Endothelial cell of umbilical vein (primary cell): ENCODE measurements at regions of chr22 and their contacts with region 1.

Region 1: DNA sequence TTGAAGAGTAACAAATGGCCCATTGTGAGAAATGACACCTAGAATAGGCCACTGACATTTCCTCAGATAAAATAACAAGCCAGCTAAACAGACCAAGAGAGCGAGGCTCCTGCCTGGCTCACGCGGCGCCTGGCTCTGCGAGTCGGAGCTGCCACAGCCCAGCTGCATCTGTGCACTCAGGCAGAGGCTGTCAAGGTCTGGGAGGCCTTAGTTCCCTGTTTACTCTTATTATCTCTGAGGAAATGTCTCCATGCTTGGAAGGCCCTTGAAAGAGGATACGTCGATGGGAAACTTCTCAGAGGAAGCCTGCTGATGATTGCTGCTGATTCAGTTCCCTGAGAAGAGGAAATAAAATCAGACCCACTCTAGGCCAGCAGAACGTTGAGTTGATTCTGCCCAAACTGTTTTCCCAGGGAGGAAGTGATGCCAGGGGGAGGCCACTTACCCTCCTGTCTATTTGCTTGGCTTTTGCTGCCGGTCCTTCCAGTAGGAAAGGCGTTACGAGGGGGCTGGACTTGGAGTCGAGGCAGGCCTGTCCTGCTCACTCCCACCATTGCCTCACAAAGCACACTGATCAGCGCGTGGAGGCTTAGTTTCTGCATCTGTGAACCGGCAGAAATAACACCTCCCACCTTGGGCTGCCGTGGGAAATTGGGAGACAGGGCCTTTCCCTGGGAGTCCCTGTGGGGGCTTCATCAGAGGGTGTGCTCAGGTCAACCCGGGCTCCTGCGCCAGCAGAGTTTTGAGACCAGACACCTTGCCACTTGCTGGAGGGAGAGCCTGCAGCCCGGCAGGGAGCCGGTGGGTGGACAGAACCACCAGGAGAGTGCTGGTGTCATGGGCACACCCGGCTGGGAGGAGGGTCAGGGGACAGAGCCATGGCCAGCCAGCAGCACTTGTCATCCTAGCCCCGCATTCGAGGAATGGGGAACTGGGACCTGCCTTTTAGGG is 209.0 kb downstream of the TBC1D22A start:
- DNase-seq: peak; percentile 98
- H3K4me3 ChIP-seq: no peak overlapping the region
- H3K27ac ChIP-seq: peak overlapping the region; percentile 81
- H3K4me1 ChIP-seq: peaks cover 20% of the 10 kb centered on the region
- H3K27me3 ChIP-seq: no peaks in the 10 kb centered on the region
- CTCF ChIP-seq: no peak
- POLR2A ChIP-seq: no peak

Region 2: GRCh38 chr22:46897246-46897623 is 74.2 kb before region 1 on chr22:
- CTCF ChIA-PET with region 1: no interaction called
- POLR2A ChIA-PET with region 1: no interaction called
- dilution Hi-C with region 1: no loop called
- intact Hi-C with region 1: no loop called
- DNase-seq: no peak
- H3K4me3 ChIP-seq: no peak overlapping the region
- H3K27ac ChIP-seq: no peak overlapping the region
- H3K4me1 ChIP-seq: no peaks in the 10 kb centered on the region
- H3K27me3 ChIP-seq: no peaks in the 10 kb centered on the region
- CTCF ChIP-seq: no peak
- POLR2A ChIP-seq: no peak

Region 3: GRCh38 chr22:46941968-46942798 is 29.2 kb before region 1 on chr22:
- CTCF ChIA-PET with region 1: no interaction called
- POLR2A ChIA-PET with region 1: no interaction called
- dilution Hi-C with region 1: no loop called
- intact Hi-C with region 1: loop called (anchors 1 kb)
- DNase-seq: no peak
- H3K4me3 ChIP-seq: no peak overlapping the region
- H3K27ac ChIP-seq: peak overlapping the region; percentile 83
- H3K4me1 ChIP-seq: peaks cover 13% of the 10 kb centered on the region
- H3K27me3 ChIP-seq: no peaks in the 10 kb centered on the region
- CTCF ChIP-seq: no peak
- POLR2A ChIP-seq: no peak

Region 4: GRCh38 chr22:46984751-46985506 is 13.5 kb after region 1 on chr22:
- CTCF ChIA-PET with region 1: no interaction called
- POLR2A ChIA-PET with region 1: no interaction called
- dilution Hi-C with region 1: no loop called
- intact Hi-C with region 1: loop called (anchors 1 kb)
- DNase-seq: peak; percentile 67
- H3K4me3 ChIP-seq: no peak overlapping the region
- H3K27ac ChIP-seq: peak overlapping the region; percentile 63
- H3K4me1 ChIP-seq: peaks cover 15% of the 10 kb centered on the region
- H3K27me3 ChIP-seq: no peaks in the 10 kb centered on the region
- CTCF ChIP-seq: no peak
- POLR2A ChIP-seq: no peak